ENCODE measurements at regions of chr17 and their contacts with region 1.

Region 1: GRCh38 chr17:47205419-47205963 is 3.7 kb upstream of the MYL4 start:
- DNase-seq: peak; percentile 59
- CTCF ChIP-seq: no peak

Region 2: DNA sequence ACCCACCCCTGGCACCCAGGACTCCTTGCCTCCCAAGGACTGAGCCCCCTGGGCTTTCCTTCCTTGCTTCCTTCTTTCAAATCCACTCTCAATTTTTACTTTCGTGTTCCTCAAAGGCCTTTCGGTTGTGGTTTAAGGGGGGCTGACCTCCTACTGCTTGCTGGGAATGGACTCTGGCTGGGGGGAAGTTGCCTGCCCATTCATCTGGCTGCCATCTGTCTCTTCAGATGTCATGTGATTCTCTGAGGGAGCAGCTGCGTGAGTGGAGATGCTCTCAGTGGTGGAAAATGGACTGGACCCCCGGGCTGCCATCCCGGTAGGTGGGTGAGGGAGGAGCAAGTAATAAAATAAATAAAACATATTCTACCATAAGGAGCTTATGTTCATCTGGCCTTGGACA is 132.6 kb before region 1 on chr17:
- CTCF ChIA-PET with region 1: no interaction called
- POLR2A ChIA-PET with region 1: no interaction called
- DNase-seq: no peak
- CTCF ChIP-seq: no peak

Region 3: DNA sequence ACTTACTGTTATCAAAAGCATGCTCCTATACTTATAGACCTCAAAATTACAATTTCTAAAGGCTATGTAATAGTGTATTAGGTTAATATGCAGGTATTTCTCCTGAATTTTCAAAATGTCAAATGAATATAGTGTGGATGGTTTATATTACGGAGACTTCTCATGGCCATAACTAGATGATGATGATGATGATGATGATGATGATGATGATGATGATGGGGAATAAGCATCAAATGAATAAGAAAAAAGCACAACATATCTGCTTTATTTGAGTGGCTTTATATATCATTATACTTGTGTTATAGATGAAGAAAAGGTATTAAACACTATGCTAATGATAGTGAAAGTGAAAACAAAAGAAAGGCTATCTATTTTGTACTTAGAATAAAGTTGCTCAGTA is 70.3 kb before region 1 on chr17:
- CTCF ChIA-PET with region 1: no interaction called
- POLR2A ChIA-PET with region 1: no interaction called
- DNase-seq: no peak
- CTCF ChIP-seq: no peak

Region 4: DNA sequence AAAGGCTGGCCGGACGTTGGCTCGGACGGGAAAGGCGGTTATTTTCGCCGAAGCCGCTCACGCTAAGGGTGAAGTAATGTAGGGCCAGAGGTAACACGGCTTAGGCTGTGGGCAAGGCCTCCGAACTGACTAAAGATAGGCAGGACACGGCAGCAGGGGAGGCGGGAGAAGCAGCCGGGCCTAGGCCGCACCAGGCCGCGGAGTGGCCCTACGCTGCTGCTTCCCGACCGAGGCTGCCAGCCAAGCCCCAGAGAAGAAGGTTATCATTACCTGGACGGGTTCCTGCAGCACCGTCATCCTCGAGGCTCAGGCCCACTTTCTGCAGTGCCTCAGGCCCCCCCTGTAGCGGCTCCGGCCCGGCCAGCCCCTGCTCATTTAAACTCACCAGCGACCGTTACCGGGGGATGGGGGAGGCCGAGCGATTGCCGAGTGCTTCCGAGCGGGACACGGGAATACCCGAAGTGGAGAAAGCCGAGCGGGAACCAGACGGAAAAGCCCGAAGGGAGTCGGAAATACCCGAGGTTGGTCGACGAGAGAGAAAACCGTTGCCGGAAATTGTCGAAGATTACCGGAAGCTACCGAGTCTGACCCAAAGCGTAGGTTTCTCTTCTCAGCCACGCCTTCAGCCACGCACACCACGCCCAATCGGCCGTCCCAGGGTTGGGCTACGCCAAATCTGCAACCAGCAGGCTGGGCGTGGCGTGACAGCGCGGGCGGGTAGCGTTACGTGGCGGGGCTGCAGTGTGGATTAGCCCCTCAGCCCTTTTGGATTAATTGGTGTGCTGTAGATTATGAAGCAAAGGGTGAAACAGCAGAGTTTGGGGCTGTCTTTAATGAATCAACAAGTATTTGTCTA is 16.4 kb before region 1 on chr17 and contains the start of gene CDC27:
- CTCF ChIA-PET with region 1: interaction called, 28 read pairs
- POLR2A ChIA-PET with region 1: interaction called, 6 read pairs
- DNase-seq: peak; percentile 98
- CTCF ChIP-seq: no peak

Region 5: GRCh38 chr17:47220531-47220999 is 15.1 kb after region 1 on chr17:
- CTCF ChIA-PET with region 1: interaction called, 18 read pairs
- POLR2A ChIA-PET with region 1: no interaction called
- DNase-seq: no peak
- CTCF ChIP-seq: no peak